GM23248 (cell line): ENCODE measurements at regions of chr1 and their contacts with region 1.

Region 1: DNA sequence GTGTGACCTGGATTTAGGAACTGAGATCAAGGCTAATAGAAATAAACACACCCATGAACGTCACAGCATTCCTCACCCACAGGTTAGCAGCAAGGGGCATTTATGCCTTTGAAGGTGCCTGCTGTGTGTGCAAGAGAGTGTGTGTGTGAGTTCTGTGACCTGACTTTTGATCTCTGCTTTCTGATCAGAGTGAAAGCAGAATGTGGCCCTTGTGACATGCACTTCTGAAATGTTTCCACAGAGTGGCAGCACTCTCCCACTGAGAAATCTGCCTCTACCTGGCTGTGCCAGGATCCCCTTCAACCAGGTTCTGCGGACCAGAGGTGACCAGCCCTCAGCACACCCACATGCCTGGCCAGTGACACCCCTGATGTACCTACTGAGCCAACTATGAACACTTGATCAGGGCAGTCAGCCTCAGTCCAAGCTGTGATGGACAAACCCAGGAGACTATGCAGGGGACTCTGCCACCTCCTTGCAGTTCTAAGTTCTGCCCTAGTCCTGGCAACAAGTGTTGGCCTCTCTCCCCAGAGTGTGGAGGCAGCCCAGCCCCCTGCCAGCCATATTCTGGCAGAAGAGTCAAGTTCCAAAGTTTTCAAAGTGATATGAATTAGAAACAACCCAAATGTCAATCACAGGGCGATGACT is 41.0 kb downstream of the RXRG start:
- DNase-seq: peak; percentile 36
- H3K4me3 ChIP-seq: no peak overlapping the region
- H3K27ac ChIP-seq: no peak overlapping the region
- H3K4me1 ChIP-seq: no peaks in the 10 kb centered on the region
- H3K27me3 ChIP-seq: peaks cover 22% of the 10 kb centered on the region

Region 2: GRCh38 chr1:165592945-165593823 is 189.2 kb after region 1 on chr1:
- in situ Hi-C with region 1: loop called (anchors 5 kb)
- DNase-seq: peak; percentile 68
- H3K4me3 ChIP-seq: no peak overlapping the region
- H3K27ac ChIP-seq: no peak overlapping the region
- H3K4me1 ChIP-seq: peaks cover 14% of the 10 kb centered on the region
- H3K27me3 ChIP-seq: peaks cover 44% of the 10 kb centered on the region